ENCODE measurements at regions of chr17 and their contacts with region 1.

Region 1: GRCh38 chr17:49180303-49180702 is 30.1 kb downstream of the GNGT2 start:
- DNase-seq: peak; percentile 88
- H3K4me3 Mint-ChIP-seq: no peak overlapping the region
- H3K27ac Mint-ChIP-seq: no peak overlapping the region
- H3K4me1 Mint-ChIP-seq: peaks cover 3% of the 10 kb centered on the region
- H3K27me3 Mint-ChIP-seq: peaks cover 1% of the 10 kb centered on the region

Region 2: DNA sequence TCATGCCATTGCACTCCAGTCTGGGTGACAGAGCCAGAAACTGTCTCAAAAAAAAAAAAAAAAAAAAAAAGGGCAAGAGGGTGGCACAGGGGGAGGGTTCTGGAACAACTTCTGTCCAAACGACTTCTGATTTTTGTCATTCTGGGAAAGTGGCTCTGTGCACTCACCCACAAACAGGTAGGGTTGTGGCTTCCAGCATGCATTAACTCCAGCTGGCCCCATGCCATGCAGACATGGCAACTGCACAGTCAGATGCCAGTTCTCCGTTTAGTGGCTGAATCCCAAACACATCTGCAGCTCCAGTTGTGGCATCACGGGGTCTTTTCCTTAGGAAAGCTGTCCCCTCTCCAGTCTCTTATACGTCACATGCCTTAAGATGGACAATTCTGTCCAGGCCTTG is 17.4 kb before region 1 on chr17:
- intact Hi-C with region 1: no loop called
- DNase-seq: no peak
- H3K4me3 Mint-ChIP-seq: no peak overlapping the region
- H3K27ac Mint-ChIP-seq: no peak overlapping the region
- H3K4me1 Mint-ChIP-seq: no peaks in the 10 kb centered on the region
- H3K27me3 Mint-ChIP-seq: peaks cover 31% of the 10 kb centered on the region

Region 3: GRCh38 chr17:49290690-49291359 is 110.5 kb after region 1 on chr17:
- intact Hi-C with region 1: loop called (anchors 1 kb)
- DNase-seq: peak; percentile 63
- H3K4me3 Mint-ChIP-seq: no peak overlapping the region
- H3K27ac Mint-ChIP-seq: no peak overlapping the region
- H3K4me1 Mint-ChIP-seq: no peaks in the 10 kb centered on the region
- H3K27me3 Mint-ChIP-seq: no peaks in the 10 kb centered on the region

Region 4: DNA sequence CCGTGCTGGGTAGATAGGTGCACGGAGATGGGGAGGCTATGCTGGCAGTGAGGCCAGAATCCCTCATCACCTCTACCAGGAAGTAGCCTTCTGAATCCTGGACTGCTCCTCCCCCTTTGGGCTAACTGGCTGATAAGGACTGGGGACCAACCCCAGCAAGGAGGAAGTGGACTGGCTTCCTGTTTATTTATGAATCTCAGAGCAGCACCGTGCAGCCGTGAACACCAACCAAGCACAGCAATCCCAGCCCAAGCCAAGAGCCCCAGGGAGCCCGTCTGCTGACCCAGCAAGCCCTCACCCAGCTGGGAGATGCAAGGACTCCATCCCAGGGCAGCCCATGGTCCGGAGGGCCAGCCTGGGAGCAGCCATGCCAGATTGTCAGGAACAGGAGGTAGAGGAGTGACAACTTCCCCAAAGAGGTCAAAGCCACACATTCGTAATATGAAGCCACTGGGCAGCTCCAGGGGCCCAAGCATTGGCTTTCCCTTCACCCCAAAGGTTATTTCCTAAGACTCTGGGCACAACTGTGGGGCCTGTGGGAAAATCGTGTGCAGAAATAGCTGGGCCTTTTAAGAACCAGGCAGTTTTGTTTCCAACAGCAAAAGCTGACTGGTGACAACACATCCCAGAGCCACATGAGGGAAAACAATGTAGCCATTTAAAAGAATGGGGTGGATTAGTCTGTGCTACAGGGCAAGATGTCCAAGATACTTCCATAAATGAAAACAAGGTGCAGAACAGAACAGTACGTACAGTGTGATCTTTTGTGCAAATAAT is 210.4 kb after region 1 on chr17:
- intact Hi-C with region 1: no loop called
- DNase-seq: peak; percentile 60
- H3K4me3 Mint-ChIP-seq: peak overlapping the region; percentile 50
- H3K27ac Mint-ChIP-seq: peak overlapping the region; percentile 80
- H3K4me1 Mint-ChIP-seq: peaks cover 58% of the 10 kb centered on the region
- H3K27me3 Mint-ChIP-seq: no peaks in the 10 kb centered on the region

Measured in activated CD4-positive, alpha-beta T cell treated with anti-CD3 and anti-CD28 coated beads, Interleukin-2, amount 10 ng/mL, durations not matched to agents 24 days and 14 days (primary cell).